ENCODE measurements at regions of chr21 and their contacts with region 1.

Region 1: DNA sequence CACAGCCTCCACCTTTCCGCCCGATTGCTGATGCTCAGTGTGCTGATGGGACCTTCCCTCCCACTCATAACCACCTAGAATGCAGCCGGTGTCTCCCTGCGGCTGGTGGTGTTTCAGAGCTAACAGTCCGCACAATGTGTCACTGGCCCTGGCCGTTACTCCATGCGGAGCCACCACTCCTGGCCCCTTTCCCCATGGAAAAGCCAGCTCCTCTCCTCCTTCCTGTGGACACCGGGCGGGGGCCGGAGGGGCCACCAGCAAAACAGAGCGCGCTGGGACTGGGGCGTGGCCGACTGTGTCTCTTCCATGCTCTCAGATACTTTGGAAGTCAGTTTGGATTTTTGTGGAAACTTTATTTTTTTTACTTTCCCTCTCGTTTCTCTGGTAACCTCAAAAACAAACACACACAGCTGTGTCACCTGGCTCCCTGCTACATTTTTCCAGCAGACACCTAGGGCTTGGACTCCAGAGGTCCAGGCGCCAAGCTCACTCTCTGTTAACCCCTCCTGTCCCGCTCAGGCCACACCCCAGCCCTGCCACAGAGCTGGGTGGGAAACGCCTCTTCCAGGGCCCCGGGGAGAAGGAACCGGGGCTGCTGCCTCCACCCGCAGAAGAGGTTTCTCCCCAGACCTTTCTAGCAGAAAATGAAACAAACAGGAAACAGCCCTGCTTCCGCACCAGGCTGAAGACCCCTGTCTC is 32.5 kb upstream of the COL6A2 start:
- DNase-seq: peak; percentile 54 to 60
- H3K4me3 ChIP-seq: peak overlapping the region in 2 of 3 donors; percentile 7 to 40
- H3K27ac ChIP-seq: peak overlapping the region; percentile 74 to 95
- H3K4me1 ChIP-seq: peaks cover 0 to 5% of the 10 kb centered on the region in 2 donors
- H3K27me3 ChIP-seq: peaks cover 0 to 4% of the 10 kb centered on the region in 2 donors
- CTCF ChIP-seq: no peak
- POLR2A ChIP-seq: no peak

Region 2: DNA sequence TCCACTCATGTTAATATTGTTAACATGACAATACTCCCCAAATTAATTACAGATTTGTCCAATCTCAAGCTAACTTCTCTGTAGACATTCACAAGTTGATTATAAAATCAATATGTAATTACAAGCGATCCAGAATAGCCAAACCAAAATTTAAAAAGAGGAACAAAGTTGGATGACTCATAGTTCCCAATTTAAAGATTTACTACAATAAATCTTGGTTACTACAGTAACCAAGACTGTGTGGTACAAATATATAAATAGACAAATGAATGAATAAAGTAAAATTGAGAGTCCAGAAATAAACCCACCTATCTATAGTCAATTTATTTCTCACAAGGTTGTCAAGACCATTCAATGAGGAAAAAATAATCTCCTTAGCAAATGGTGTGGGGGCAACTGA is 1499.0 kb before region 1 on chr21:
- intact Hi-C with region 1: no loop called
- DNase-seq: no peak
- H3K4me3 ChIP-seq: no peak overlapping the region
- H3K27ac ChIP-seq: no peak overlapping the region
- H3K4me1 ChIP-seq: no peaks in the 10 kb centered on the region
- H3K27me3 ChIP-seq: peaks cover 0 to 11% of the 10 kb centered on the region in 2 donors
- CTCF ChIP-seq: no peak
- POLR2A ChIP-seq: no peak

Region 3: DNA sequence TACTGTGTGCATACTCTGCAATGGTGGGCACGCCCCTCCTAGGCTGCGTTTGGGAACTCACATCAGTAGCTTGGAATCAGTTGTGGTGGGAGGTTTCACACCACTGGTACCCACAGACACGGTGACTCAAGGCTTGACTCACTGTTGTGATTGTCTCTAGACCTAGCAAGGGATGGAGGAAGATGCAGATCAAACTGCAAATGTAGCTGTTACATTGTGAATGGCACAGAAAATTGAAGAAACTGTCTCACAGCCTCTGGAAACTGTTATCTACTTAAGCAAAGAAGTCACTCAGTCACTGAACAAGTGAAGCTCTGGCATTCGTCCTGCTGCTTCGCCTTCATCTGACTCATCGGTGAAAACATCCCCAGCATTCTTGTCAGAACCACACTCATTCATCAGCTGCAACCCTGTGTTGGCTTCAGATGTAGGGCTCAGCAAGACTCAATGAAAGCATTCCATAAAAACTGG is 837.2 kb before region 1 on chr21:
- intact Hi-C with region 1: loop called (anchors 5 kb)
- DNase-seq: peak in 1 of 2 donors; percentile 49
- H3K4me3 ChIP-seq: no peak overlapping the region
- H3K27ac ChIP-seq: no peak overlapping the region
- H3K4me1 ChIP-seq: no peaks in the 10 kb centered on the region
- H3K27me3 ChIP-seq: no peaks in the 10 kb centered on the region
- CTCF ChIP-seq: no peak
- POLR2A ChIP-seq: no peak

Measured in breast epithelium (tissue), 4 donors.